ENCODE measurements at regions of chrX and their contacts with region 1.

Region 1: GRCh38 chrX:15143050-15143824 is 126.6 kb downstream of the ASB9 start:
- DNase-seq: peak in 1 of 2 experiments; percentile 28
- H3K4me3 ChIP-seq: no peak overlapping the region
- H3K27ac ChIP-seq: no peak overlapping the region
- H3K4me1 ChIP-seq: no peaks in the 10 kb centered on the region
- H3K27me3 ChIP-seq: no peaks in the 10 kb centered on the region
- CTCF ChIP-seq: peak; percentile 84

Region 2: GRCh38 chrX:14039344-14039743 is 1103.9 kb before region 1 on chrX:
- CTCF ChIA-PET with region 1: no interaction called
- POLR2A ChIA-PET with region 1: no interaction called
- intact Hi-C with region 1: loop called (anchors 5 kb)
- DNase-seq: peak; percentile 18 to 41
- H3K4me3 ChIP-seq: no peak overlapping the region
- H3K27ac ChIP-seq: no peak overlapping the region
- H3K4me1 ChIP-seq: no peaks in the 10 kb centered on the region
- H3K27me3 ChIP-seq: no peaks in the 10 kb centered on the region
- CTCF ChIP-seq: peak; percentile 80

Region 3: DNA sequence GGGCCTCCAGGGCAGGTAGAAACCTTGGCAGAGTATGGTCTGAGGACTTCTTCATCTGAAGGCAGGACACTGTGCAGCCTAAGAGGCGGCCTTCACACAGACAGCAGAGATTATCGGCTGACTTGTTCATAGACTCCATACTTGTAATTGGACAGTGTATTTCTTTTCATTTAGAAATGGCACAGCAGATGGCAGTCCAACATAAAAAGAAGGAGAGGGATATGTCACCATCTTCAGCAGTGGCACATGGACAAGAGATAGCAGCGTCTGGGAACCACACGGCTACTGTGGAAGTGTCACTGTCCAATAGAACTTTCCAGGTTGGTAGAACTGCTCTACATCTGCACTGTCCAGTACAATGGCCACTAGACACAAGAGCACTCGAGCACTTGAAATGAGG is 1091.8 kb before region 1 on chrX:
- CTCF ChIA-PET with region 1: no interaction called
- POLR2A ChIA-PET with region 1: no interaction called
- intact Hi-C with region 1: loop called (anchors 5 kb)
- DNase-seq: no peak
- H3K4me3 ChIP-seq: no peak overlapping the region
- H3K27ac ChIP-seq: no peak overlapping the region
- H3K4me1 ChIP-seq: no peaks in the 10 kb centered on the region
- H3K27me3 ChIP-seq: no peaks in the 10 kb centered on the region
- CTCF ChIP-seq: peak; percentile 41; the same call in 1 of the 2 replicates

Region 4: DNA sequence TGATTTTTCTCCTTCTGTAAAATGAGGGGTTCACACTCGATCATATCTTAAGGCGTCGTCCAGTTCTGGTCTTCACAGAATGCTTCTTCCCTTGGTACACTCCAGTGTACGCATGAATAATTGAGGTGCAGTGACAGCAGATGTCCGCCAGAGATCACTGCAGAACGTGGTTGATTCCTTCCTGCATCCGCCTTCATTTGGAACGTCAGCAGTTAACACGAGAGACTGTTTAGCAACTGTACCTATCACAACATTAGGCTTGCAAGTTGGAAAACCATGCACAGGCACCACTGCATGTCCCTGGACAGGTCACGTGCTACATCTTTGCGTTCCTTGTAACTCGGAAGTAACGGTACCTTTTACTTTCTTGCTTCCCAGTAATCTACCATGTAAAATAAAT is 1047.5 kb before region 1 on chrX:
- CTCF ChIA-PET with region 1: no interaction called
- POLR2A ChIA-PET with region 1: no interaction called
- intact Hi-C with region 1: loop called (anchors 2 kb)
- DNase-seq: peak in 1 of 2 experiments; percentile 18
- H3K4me3 ChIP-seq: no peak overlapping the region
- H3K27ac ChIP-seq: no peak overlapping the region
- H3K4me1 ChIP-seq: no peaks in the 10 kb centered on the region
- H3K27me3 ChIP-seq: no peaks in the 10 kb centered on the region
- CTCF ChIP-seq: peak; percentile 70

Region 5: DNA sequence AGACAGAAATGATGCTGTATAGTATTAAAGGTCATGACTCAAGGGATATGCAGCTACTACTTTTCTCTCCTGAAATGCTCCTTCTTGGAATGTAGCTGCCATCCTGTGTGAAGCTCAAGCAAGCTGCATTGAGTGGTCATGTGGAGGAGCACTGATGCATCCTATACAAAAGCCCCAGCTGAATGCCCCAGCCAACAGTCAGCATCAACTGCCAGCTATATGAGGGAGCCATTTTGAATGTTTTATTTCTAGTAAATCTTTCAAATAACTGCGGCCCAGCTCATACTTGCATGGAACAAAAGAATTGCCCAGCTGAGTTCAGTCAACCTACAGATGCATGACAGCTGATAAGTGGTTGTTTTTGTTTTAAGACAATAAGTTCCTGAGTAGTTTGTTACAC is 948.5 kb before region 1 on chrX:
- CTCF ChIA-PET with region 1: no interaction called
- POLR2A ChIA-PET with region 1: no interaction called
- intact Hi-C with region 1: no loop called
- DNase-seq: no peak
- H3K4me3 ChIP-seq: no peak overlapping the region
- H3K27ac ChIP-seq: no peak overlapping the region
- H3K4me1 ChIP-seq: no peaks in the 10 kb centered on the region
- H3K27me3 ChIP-seq: no peaks in the 10 kb centered on the region
- CTCF ChIP-seq: no peak

Region 6: DNA sequence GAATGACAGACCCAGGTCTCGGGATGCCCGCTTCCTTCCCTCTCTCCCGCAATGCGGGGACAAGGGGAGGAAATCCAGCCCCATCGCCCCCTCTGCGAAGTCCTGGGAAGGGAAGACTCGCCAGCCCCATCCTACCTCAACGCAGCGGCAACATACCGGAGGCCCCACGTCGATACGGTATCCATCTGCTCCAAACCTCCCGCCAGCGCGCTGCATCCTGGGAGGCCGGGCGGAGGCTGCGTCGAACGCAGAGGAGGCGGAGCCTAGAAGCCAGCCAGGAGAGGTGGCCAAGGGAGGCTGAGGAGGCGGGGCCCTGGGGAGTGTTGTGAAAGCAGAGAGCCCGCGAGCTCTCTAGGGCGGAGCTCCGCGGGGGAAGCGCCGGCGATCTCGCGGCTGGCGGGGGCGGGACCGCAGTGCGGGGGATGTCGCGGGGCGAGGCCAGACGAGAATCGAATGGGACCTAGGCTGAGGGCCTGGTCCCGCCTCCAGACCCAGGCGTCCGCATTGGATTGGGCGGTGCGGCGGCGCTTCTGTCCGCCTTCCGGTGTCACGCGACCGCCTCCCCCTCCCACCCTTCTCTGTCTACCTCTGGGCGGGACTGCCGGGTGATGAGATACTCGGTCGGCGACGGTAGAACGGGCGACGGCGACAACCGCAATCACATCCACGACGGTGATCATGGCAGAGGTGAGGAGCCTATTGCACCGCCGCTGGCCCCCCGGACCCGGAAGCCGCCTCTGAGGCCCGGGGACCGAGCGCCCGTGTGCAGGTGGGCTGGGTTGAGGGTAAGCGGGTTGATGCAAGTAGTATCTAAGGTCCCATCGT is 270.2 kb before region 1 on chrX and contains the starts of genes FANCB and MOSPD2:
- CTCF ChIA-PET with region 1: no interaction called
- POLR2A ChIA-PET with region 1: no interaction called
- intact Hi-C with region 1: loop called (anchors 5 kb)
- DNase-seq: peak; percentile 88 to 96
- H3K4me3 ChIP-seq: peak within 1 kb of the TSS; percentile 95
- H3K27ac ChIP-seq: peak within 1 kb of the TSS; percentile 68
- H3K4me1 ChIP-seq: peaks cover 14% of the 10 kb centered on the region; the same call in 1 of the 2 replicates
- H3K27me3 ChIP-seq: no peaks in the 10 kb centered on the region
- CTCF ChIP-seq: no peak
- total RNA-seq, gene FANCB: 6.8 and 9.5 TPM in 2 replicates
- total RNA-seq, gene MOSPD2: 15.8 and 19.4 TPM in 2 replicates

Region 7: GRCh38 chrX:15242899-15243555 is 99.8 kb after region 1 on chrX:
- CTCF ChIA-PET with region 1: no interaction called
- POLR2A ChIA-PET with region 1: no interaction called
- intact Hi-C with region 1: loop called (anchors 10 kb)
- DNase-seq: peak; percentile 9 to 40
- H3K4me3 ChIP-seq: no peak overlapping the region
- H3K27ac ChIP-seq: no peak overlapping the region
- H3K4me1 ChIP-seq: no peaks in the 10 kb centered on the region
- H3K27me3 ChIP-seq: no peaks in the 10 kb centered on the region
- CTCF ChIP-seq: peak; percentile 68

Region 8: DNA sequence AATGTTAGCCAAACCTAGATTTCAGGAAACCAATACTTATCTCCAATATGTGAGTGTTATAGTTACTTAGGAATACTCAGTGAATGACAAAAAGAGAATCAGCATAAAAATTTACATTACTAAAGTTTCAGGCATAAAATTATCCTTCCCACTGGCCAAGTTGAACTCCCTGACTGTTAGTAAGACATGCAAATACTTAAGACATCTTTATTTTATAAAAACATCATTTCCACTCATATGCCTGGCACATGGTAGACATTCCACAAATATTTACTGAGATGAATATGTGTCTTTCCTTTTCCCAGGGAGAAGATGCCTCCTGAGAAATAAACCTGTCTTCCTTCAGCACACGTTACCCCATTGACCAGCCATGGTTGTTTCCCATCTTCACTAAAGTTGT is 233.7 kb after region 1 on chrX:
- CTCF ChIA-PET with region 1: no interaction called
- POLR2A ChIA-PET with region 1: no interaction called
- intact Hi-C with region 1: no loop called
- DNase-seq: no peak
- H3K4me3 ChIP-seq: no peak overlapping the region
- H3K27ac ChIP-seq: no peak overlapping the region
- H3K4me1 ChIP-seq: no peaks in the 10 kb centered on the region
- H3K27me3 ChIP-seq: no peaks in the 10 kb centered on the region
- CTCF ChIP-seq: no peak

Region 9: GRCh38 chrX:15745195-15745594 is 602.0 kb after region 1 on chrX:
- CTCF ChIA-PET with region 1: no interaction called
- POLR2A ChIA-PET with region 1: no interaction called
- intact Hi-C with region 1: no loop called
- DNase-seq: no peak
- H3K4me3 ChIP-seq: no peak overlapping the region
- H3K27ac ChIP-seq: no peak overlapping the region
- H3K4me1 ChIP-seq: no peaks in the 10 kb centered on the region
- H3K27me3 ChIP-seq: no peaks in the 10 kb centered on the region
- CTCF ChIP-seq: no peak